ENCODE measurements at regions of chr1 and their contacts with region 1.

Region 1: GRCh38 chr1:1574721-1575537 is at the start of gene SSU72:
- DNase-seq: peak; percentile 92 to 93
- H3K4me3 ChIP-seq: peak within 1 kb of the TSS; percentile 81 to 95
- H3K27ac ChIP-seq: peak within 1 kb of the TSS; percentile 98
- H3K4me1 ChIP-seq: peaks cover 0 to 41% (median 22%) of the 10 kb centered on the region in 4 donors
- H3K27me3 ChIP-seq: no peaks in the 10 kb centered on the region
- CTCF ChIP-seq: peak in 1 of 2 experiments; percentile 27

Region 2: GRCh38 chr1:1615256-1616044 is 40.5 kb after region 1 on chr1 and contains the start of gene MIB2:
- intact Hi-C with region 1: loop called (anchors 2 kb)
- DNase-seq: peak; percentile 91 to 96
- H3K4me3 ChIP-seq: peak within 1 kb of the TSS; percentile 99 to 100
- H3K27ac ChIP-seq: peak within 1 kb of the TSS; percentile 100
- H3K4me1 ChIP-seq: peaks cover 5 to 40% (median 33%) of the 10 kb centered on the region in 4 donors
- H3K27me3 ChIP-seq: no peaks in the 10 kb centered on the region
- CTCF ChIP-seq: no peak

Region 3: GRCh38 chr1:1703796-1704195 is 128.9 kb after region 1 on chr1:
- intact Hi-C with region 1: no loop called
- DNase-seq: peak in 1 of 2 donors; percentile 54
- H3K4me3 ChIP-seq: no peak overlapping the region
- H3K27ac ChIP-seq: no peak overlapping the region
- H3K4me1 ChIP-seq: no peaks in the 10 kb centered on the region
- H3K27me3 ChIP-seq: no peaks in the 10 kb centered on the region
- CTCF ChIP-seq: no peak

Region 4: GRCh38 chr1:1721201-1721600 is 146.3 kb after region 1 on chr1:
- intact Hi-C with region 1: no loop called
- DNase-seq: no peak
- H3K4me3 ChIP-seq: no peak overlapping the region
- H3K27ac ChIP-seq: no peak overlapping the region
- H3K4me1 ChIP-seq: peaks cover 0 to 3% (median 0%) of the 10 kb centered on the region in 4 donors
- H3K27me3 ChIP-seq: no peaks in the 10 kb centered on the region
- CTCF ChIP-seq: no peak

Measured in tibial artery (tissue), 4 donors.